Brain microvascular endothelial cell (primary cell): ENCODE measurements at regions of chr2 and their contacts with region 1.

Region 1: DNA sequence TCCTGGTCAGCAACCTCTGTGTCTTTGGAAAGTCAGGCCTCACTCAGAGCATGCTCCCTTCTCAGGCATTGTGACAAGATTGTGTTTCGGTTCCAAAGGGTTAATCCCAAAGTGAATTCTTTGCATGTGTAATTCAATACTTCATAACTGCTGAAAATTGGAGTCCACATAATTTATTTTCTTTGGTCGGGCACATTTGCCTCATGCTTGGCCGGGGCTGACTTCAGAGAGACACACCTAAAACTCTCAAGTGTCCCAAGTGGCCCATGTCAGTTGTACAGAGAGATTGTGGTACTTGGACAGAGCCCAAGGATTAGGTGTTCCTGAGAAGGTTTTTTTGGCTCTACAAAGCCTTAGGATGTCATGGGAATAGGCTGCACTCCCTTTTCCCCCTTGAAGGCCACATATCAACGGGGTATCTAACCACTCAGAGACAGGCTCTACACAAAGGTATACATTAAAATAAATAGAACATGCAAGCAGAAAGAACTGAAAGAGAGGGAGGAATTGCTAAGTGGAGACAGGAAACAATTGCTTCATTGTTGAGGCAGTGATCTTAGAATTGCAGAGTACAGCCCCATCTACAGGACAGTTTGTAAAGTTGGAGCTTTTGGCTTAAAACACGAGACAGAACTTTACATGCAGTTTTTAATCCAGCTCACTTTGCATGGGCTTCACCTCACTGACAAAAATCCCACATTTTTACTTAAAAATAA is 1232.3 kb upstream of the ZEB2 start:
- DNase-seq: peak; percentile 70
- H3K4me3 ChIP-seq: no peak overlapping the region
- H3K27ac ChIP-seq: peak overlapping the region; percentile 52
- H3K27me3 ChIP-seq: no peaks in the 10 kb centered on the region
- CTCF ChIP-seq: peak; percentile 74

Region 2: DNA sequence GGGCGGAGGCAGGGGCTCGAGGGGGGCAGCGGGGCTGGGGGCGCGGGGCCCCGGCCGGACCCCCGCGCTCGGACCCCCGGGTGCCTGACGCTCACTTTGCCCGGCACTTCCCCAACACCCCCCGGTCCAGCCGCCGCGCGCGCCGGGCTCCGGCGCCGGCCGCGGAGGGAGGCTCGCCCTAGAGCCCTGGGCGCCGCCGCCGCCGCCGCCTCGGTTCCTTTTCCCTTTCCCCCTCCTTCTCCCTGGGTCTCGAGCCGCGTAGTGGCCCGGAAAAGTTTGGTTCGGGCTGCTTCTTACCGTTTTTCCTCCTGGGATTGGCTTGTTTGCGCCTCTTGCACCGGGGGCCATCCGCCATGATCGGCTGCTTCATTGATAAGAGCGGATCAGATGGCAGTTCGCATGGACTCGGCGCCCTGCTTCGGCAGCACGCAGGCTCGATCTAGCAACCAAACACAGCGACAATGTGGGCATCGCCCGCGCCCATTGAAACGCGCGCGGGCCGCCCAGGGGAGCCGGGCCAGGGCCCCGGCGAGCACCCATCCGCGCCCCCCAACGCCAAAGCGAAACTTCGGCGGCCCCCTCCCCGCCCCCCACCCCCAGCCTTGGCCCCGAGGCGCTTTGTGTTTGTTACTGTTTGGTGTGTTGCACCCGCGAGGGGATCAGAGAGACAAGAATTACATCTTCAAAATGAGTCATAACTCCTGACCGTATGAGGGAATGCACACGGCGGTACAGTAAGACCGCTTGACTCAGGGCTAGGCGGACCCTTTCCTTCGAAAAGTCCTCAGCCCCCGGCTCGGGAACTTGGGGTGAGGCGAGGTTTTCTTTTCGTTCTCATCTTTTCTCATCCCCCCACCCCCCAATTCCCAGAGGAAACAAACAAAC is 1235.0 kb before region 1 on chr2:
- in situ Hi-C with region 1: loop called (anchors 25 kb)
- DNase-seq: peak; percentile 95
- H3K4me3 ChIP-seq: peak overlapping the region; percentile 96
- H3K27ac ChIP-seq: peak overlapping the region; percentile 99
- H3K27me3 ChIP-seq: no peaks in the 10 kb centered on the region
- CTCF ChIP-seq: no peak

Region 3: GRCh38 chr2:145563741-145564615 is 188.3 kb before region 1 on chr2:
- in situ Hi-C with region 1: no loop called
- DNase-seq: no peak
- H3K4me3 ChIP-seq: no peak overlapping the region
- H3K27ac ChIP-seq: no peak overlapping the region
- H3K27me3 ChIP-seq: no peaks in the 10 kb centered on the region
- CTCF ChIP-seq: no peak